Calu3 (cell line): ENCODE measurements at regions of chr6 and their contacts with region 1.

Region 1: DNA sequence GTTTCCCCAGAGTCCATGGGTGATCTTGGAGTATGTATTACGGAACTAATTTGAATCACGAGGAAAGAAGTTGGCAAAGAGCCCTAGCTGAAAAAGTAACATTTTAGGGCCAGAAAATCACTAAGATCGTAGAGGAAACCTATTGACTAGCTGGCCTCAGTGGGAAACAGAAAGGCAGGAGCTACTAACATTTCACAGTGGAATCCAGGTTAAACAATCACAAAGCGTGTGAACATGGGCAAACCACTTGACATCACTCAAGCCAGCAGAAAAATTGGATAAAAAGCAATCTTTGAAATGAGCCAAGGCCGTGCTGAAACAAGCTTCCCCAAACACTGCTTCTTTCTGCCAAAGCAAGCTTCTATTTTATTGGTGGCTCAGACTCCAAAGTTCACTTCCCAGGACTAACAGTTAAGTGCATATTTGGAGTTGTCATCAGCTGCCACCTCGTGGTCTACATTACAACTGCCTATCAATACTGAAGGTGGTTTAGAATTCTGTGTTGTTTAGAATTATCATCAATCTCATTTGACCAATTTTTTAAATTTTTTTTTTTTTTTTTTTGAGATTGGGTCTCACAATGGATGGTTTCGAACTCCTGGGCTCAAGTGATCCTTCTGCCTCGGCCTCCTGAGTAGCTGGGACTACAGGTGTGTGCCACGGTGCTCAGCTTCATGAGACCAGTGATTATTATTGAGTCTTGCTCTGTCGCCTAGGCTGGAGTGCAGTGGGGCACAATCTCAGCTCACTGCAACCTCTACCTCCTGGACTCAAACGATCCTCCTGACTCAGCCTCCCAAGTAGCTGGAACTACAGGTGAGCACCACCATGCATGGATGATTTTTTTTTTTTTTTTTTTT is 10.6 kb downstream of the RPS10 start:
- DNase-seq: peak; percentile 72
- H3K4me3 Mint-ChIP-seq: no peak overlapping the region
- H3K27ac Mint-ChIP-seq: peak overlapping the region; percentile 62
- H3K4me1 Mint-ChIP-seq: peaks cover 43% of the 10 kb centered on the region
- H3K27me3 Mint-ChIP-seq: no peaks in the 10 kb centered on the region
- CTCF ChIP-seq: peak; percentile 85

Region 2: GRCh38 chr6:34161857-34162515 is 253.2 kb before region 1 on chr6:
- CTCF ChIA-PET with region 1: interaction called, 83 read pairs
- intact Hi-C with region 1: loop called (anchors 1 kb)
- DNase-seq: no peak
- H3K4me3 Mint-ChIP-seq: no peak overlapping the region
- H3K27ac Mint-ChIP-seq: no peak overlapping the region
- H3K4me1 Mint-ChIP-seq: no peaks in the 10 kb centered on the region
- H3K27me3 Mint-ChIP-seq: peaks cover 54% of the 10 kb centered on the region
- CTCF ChIP-seq: no peak

Region 3: GRCh38 chr6:34223956-34224940 is 191.0 kb before region 1 on chr6:
- CTCF ChIA-PET with region 1: interaction called, 10 read pairs
- intact Hi-C with region 1: no loop called
- DNase-seq: peak; percentile 99
- H3K4me3 Mint-ChIP-seq: peak overlapping the region; percentile 51
- H3K27ac Mint-ChIP-seq: peak overlapping the region; percentile 59
- H3K4me1 Mint-ChIP-seq: peaks cover 59% of the 10 kb centered on the region
- H3K27me3 Mint-ChIP-seq: no peaks in the 10 kb centered on the region
- CTCF ChIP-seq: no peak

Region 4: GRCh38 chr6:34315780-34316179 is 99.4 kb before region 1 on chr6:
- CTCF ChIA-PET with region 1: interaction called, 12 read pairs
- intact Hi-C with region 1: no loop called
- DNase-seq: no peak
- H3K4me3 Mint-ChIP-seq: no peak overlapping the region
- H3K27ac Mint-ChIP-seq: no peak overlapping the region
- H3K4me1 Mint-ChIP-seq: peaks cover 55% of the 10 kb centered on the region
- H3K27me3 Mint-ChIP-seq: no peaks in the 10 kb centered on the region
- CTCF ChIP-seq: no peak

Region 5: GRCh38 chr6:34425498-34426410 is 10.5 kb after region 1 on chr6 and contains the start of gene RPS10:
- CTCF ChIA-PET with region 1: interaction called, 25 read pairs
- intact Hi-C with region 1: no loop called
- DNase-seq: peak; percentile 100
- H3K4me3 Mint-ChIP-seq: peak within 1 kb of the TSS; percentile 100
- H3K27ac Mint-ChIP-seq: peak within 1 kb of the TSS; percentile 100
- H3K4me1 Mint-ChIP-seq: peaks cover 21% of the 10 kb centered on the region
- H3K27me3 Mint-ChIP-seq: peaks cover 21% of the 10 kb centered on the region
- CTCF ChIP-seq: no peak
- total RNA-seq, gene RPS10: 1,887 and 2,049 TPM in 2 replicates

Region 6: GRCh38 chr6:35391240-35391968 is 976.2 kb after region 1 on chr6:
- CTCF ChIA-PET with region 1: no interaction called
- intact Hi-C with region 1: no loop called
- DNase-seq: peak; percentile 71
- H3K4me3 Mint-ChIP-seq: no peak overlapping the region
- H3K27ac Mint-ChIP-seq: peak overlapping the region; percentile 62
- H3K4me1 Mint-ChIP-seq: peaks cover 67% of the 10 kb centered on the region
- H3K27me3 Mint-ChIP-seq: no peaks in the 10 kb centered on the region
- CTCF ChIP-seq: no peak